HepG2 (cell line): ENCODE measurements at regions of chrX and their contacts with region 1.

Region 1: GRCh38 chrX:88425739-88426138 is 321.3 kb upstream of the CPXCR1 start:
- DNase-seq: peak; percentile 18
- ATAC-seq: no peak
- H3K4me3 ChIP-seq: no peak overlapping the region
- H3K27ac ChIP-seq: no peak overlapping the region
- H3K4me1 ChIP-seq: peaks cover 8% of the 10 kb centered on the region; the same call in 1 of the 2 replicates
- H3K27me3 ChIP-seq: no peaks in the 10 kb centered on the region
- CTCF ChIP-seq: peak; percentile 52
- EP300 ChIP-seq: no peak
- POLR2A ChIP-seq: no peak
- RAD21 ChIP-seq: no peak

Region 2: GRCh38 chrX:88135735-88136134 is 290.0 kb before region 1 on chrX:
- CTCF ChIA-PET with region 1: no interaction called
- POLR2A ChIA-PET with region 1: no interaction called
- in situ Hi-C with region 1: no loop called
- intact Hi-C with region 1: loop called (anchors 2 kb)
- DNase-seq: peak; percentile 1
- ATAC-seq: no peak
- H3K4me3 ChIP-seq: no peak overlapping the region; a peak in 1 of 6 replicates
- H3K27ac ChIP-seq: no peak overlapping the region
- H3K4me1 ChIP-seq: no peaks in the 10 kb centered on the region
- H3K27me3 ChIP-seq: no peaks in the 10 kb centered on the region
- CTCF ChIP-seq: peak; percentile 26
- EP300 ChIP-seq: no peak
- POLR2A ChIP-seq: no peak
- RAD21 ChIP-seq: no peak

Region 3: DNA sequence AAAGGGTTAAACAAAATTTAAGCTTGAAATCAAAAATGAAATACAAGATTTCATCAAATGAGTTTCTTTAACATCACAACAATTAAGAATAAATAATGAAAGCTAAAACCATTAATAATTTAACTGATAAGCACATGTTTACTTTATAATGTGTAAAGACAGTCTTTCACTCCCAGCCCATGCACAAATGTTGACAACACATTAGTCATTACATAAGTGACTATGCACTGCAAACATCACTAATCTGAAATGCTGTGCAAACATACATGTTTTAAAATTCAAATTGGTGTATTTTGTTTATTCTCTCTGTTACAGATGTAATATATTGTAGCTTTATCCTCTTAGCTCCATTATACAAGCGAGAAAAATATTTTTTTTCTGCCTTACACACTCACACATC is 100.6 kb after region 1 on chrX:
- CTCF ChIA-PET with region 1: no interaction called
- POLR2A ChIA-PET with region 1: no interaction called
- in situ Hi-C with region 1: no loop called
- intact Hi-C with region 1: no loop called
- DNase-seq: peak; percentile 5
- ATAC-seq: no peak
- H3K4me3 ChIP-seq: no peak overlapping the region
- H3K27ac ChIP-seq: no peak overlapping the region
- H3K4me1 ChIP-seq: peaks cover 11% of the 10 kb centered on the region
- H3K27me3 ChIP-seq: no peaks in the 10 kb centered on the region
- CTCF ChIP-seq: no peak
- EP300 ChIP-seq: peak in 1 of 2 experiments; percentile 57; a peak in 1 of 4 replicates
- POLR2A ChIP-seq: no peak
- RAD21 ChIP-seq: no peak

Region 4: GRCh38 chrX:88604433-88605221 is 178.9 kb after region 1 on chrX:
- CTCF ChIA-PET with region 1: no interaction called
- POLR2A ChIA-PET with region 1: no interaction called
- in situ Hi-C with region 1: loop called (anchors 5 kb)
- intact Hi-C with region 1: loop called (anchors 2 kb)
- DNase-seq: peak; percentile 96
- ATAC-seq: peak; percentile 99
- H3K4me3 ChIP-seq: peak overlapping the region in 1 of 3 experiments; percentile 25; a peak in 1 of 6 replicates
- H3K27ac ChIP-seq: peak overlapping the region; percentile 98
- H3K4me1 ChIP-seq: peaks cover 57% of the 10 kb centered on the region
- H3K27me3 ChIP-seq: no peaks in the 10 kb centered on the region
- CTCF ChIP-seq: no peak
- EP300 ChIP-seq: peak in 1 of 2 experiments; percentile 93; a peak in 2 of 4 replicates
- POLR2A ChIP-seq: peak; percentile 64 to 73; a peak in 3 of 4 replicates
- RAD21 ChIP-seq: no peak